HEK293 (cell line): ENCODE measurements at regions of chr12 and their contacts with region 1.

Region 1: DNA sequence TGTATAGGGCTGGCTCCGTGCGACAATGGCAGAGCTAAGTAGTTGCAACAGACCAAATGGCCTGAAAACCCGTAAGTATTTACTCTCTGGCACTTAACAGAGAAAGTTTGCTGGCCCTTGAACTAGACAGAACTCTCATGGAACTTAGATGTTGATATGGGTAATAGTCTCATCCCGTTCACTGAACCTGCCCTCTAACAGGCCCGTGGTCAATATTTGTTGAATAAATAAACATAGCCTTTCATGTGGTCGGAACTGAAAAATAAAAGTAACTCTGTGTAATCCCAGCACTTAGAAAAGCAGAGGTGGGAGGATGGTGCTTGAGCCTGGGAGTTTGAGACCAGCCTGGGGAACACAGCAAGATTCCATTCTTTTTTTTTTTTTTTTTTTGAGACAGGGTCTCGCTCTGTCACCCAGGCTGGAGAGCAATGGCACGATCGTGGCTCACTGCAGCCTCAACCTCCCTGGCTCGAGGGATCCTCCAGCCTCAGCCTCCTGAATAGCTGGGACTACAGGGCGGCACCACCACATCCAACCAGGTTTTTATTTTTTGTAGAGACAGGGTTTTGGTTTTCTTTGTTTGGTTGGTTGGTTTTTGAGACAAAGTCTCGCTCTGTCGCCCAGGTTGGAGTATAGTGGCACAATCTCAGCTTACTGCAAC is 29.7 kb downstream of the KDM2B start:
- H3K4me3 ChIP-seq: no peak overlapping the region
- H3K27ac ChIP-seq: no peak overlapping the region
- H3K4me1 ChIP-seq: no peaks in the 10 kb centered on the region
- CTCF ChIP-seq: no peak

Region 2: DNA sequence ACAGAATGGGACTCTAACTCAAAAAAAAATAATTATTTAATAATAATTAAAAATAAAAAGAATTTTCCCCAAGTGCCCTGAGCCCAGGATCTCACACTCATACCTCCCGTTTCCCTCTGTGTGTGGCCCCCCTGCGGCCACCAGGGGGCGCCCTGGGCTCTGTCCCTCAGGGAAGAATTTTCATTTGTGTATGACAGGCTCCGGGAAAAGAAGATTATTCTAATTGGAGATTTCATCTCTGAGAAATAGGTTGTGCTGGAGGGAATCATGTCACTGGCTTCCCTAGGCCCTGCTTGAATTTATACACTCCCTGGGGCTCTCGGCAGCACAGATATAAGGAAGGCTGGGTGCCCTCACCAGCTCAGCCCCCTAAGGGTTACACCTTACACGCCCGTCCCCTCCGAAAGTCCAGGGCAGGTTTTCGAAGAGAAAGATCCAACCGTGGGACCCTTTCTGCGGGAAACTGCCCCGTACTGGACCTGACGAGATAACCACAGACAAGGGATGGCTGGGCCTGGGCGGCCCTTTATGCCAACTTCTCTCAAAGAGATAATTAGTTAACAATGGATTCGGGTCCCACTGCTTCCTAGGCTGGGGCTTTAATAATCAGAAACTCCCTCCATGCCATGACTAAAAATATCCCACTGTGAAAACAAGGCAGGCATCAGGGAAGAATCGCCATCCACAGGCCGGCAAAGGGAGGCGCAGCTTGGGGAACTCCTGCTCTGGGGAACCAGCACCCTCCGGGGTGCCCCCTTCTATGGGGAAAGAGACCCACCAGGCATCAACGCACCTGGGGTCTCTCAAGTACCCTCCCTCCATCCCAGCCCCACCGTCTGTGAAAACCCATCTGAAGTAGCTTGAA is 50.9 kb before region 1 on chr12:
- CTCF ChIA-PET with region 1: interaction called, 10 read pairs
- POLR2A ChIA-PET with region 1: no interaction called
- H3K4me3 ChIP-seq: no peak overlapping the region
- H3K27ac ChIP-seq: no peak overlapping the region
- H3K4me1 ChIP-seq: no peaks in the 10 kb centered on the region
- CTCF ChIP-seq: no peak

Region 3: GRCh38 chr12:121582583-121583333 is 31.7 kb after region 1 on chr12:
- CTCF ChIA-PET with region 1: interaction called, 12 read pairs
- POLR2A ChIA-PET with region 1: no interaction called
- H3K4me3 ChIP-seq: no peak overlapping the region
- H3K27ac ChIP-seq: no peak overlapping the region
- H3K4me1 ChIP-seq: peaks cover 12% of the 10 kb centered on the region
- CTCF ChIP-seq: no peak

Region 4: GRCh38 chr12:121620328-121620891 is 69.3 kb after region 1 on chr12:
- CTCF ChIA-PET with region 1: interaction called, 103 read pairs
- POLR2A ChIA-PET with region 1: no interaction called
- H3K4me3 ChIP-seq: no peak overlapping the region
- H3K27ac ChIP-seq: no peak overlapping the region
- H3K4me1 ChIP-seq: 0 out of 2 replicates have a peak, but pooled peaks cover 2% of the 10 kb centered on the region
- CTCF ChIP-seq: no peak

Region 5: GRCh38 chr12:121626087-121626852 is 75.2 kb after region 1 on chr12 and contains the start of gene ORAI1:
- CTCF ChIA-PET with region 1: interaction called, 103 read pairs
- POLR2A ChIA-PET with region 1: interaction called, 7 read pairs
- H3K4me3 ChIP-seq: peak within 1 kb of the TSS; percentile 65
- H3K27ac ChIP-seq: peak within 1 kb of the TSS; percentile 61; the same call in 1 of the 2 replicates
- H3K4me1 ChIP-seq: peaks cover 5% of the 10 kb centered on the region; the same call in 1 of the 2 replicates
- CTCF ChIP-seq: peak; percentile 31; the same call in 1 of the 2 replicates

Region 6: DNA sequence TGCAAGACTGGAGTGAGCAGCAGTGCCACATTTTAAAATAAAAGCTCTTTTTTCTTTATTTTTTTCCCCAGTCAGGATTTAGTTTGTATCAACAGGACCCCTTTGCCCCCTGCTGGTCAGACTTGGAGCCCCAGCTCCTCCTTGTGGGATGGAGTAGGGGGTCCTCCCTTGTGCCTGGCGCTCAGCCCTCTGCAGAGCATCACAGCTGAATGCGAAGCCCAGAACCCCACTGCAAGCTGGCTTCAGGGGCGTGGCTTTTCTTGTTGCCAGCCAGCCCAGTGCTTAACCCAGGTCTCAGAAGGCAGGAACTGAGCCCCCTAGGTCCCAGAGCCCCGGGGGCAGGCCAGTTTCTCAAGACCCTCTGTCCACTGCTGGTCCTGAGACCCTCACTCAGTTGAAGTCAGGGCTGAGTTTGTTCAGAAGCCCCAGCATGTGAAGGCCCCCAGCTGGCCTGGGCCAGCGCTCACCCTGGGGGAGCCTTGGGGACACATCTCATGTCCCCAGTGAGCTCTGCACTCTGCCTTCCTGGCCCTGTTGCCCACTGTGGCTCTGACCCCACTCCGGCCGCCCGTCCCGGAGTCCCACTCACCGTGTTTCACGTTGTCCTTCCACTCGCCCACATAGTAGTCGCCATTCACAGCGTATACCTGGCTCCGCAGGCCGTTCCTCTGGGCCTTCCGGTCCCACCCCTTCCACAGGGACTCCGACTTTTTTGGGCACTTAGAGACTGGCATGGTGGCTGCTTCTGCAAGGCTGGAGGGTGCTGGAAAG is 117.8 kb after region 1 on chr12:
- CTCF ChIA-PET with region 1: interaction called, 121 read pairs
- POLR2A ChIA-PET with region 1: interaction called, 5 read pairs
- H3K4me3 ChIP-seq: no peak overlapping the region
- H3K27ac ChIP-seq: no peak overlapping the region
- H3K4me1 ChIP-seq: 0 out of 2 replicates have a peak, but pooled peaks cover 2% of the 10 kb centered on the region
- CTCF ChIP-seq: peak; percentile 38; the same call in 1 of the 2 replicates

Region 7: GRCh38 chr12:121678716-121679580 is 127.8 kb after region 1 on chr12:
- CTCF ChIA-PET with region 1: interaction called, 121 read pairs
- POLR2A ChIA-PET with region 1: no interaction called
- H3K4me3 ChIP-seq: no peak overlapping the region
- H3K27ac ChIP-seq: no peak overlapping the region
- H3K4me1 ChIP-seq: no peaks in the 10 kb centered on the region
- CTCF ChIP-seq: no peak